Heart right ventricle (tissue), 16 donors: ENCODE measurements at regions of chr21 and their contacts with region 1.

Region 1: GRCh38 chr21:35779690-35780570 is 280.4 kb downstream of the SETD4 start:
- DNase-seq: no peak
- ATAC-seq: peak in 4 of 8 donors; percentile 40 to 48 (median 44)
- H3K4me3 ChIP-seq: no peak overlapping the region
- H3K27ac ChIP-seq: peak overlapping the region in 4 of 10 donors; percentile 20 to 56 (median 34)
- H3K4me1 ChIP-seq: peaks cover 0 to 18% (median 9%) of the 10 kb centered on the region in 9 donors
- H3K27me3 ChIP-seq: peaks cover 0 to 4% (median 0%) of the 10 kb centered on the region in 7 donors
- CTCF ChIP-seq: no peak

Region 2: DNA sequence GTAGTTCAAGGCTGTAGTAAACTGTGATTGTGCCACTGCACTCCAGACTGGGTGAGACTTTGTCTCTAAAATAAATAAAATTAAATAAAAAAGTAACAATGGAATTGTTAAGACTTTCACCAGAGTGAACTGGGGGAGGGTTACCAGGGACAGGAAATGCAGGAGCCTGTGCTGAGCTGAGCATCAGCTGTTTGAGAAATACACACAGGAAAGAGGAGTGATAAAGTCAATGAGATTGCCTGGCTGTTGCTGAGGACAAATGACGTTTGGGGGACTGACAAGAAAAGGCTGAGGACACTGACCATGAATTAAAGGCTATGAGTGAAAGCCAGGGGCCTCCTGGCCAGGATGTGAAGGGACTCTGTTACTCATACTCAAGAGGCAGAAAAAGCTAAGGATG is 54.1 kb after region 1 on chr21:
- intact Hi-C with region 1: loop called in 1 of 10 experiments (anchors 10 kb)
- DNase-seq: no peak
- ATAC-seq: peak in 4 of 8 donors; percentile 33 to 68 (median 58)
- H3K4me3 ChIP-seq: no peak overlapping the region
- H3K27ac ChIP-seq: peak overlapping the region in 2 of 10 donors; percentile 7 to 58
- H3K4me1 ChIP-seq: peaks cover 0 to 5% (median 0%) of the 10 kb centered on the region in 9 donors
- H3K27me3 ChIP-seq: peaks cover 0 to 18% (median 6%) of the 10 kb centered on the region in 7 donors
- CTCF ChIP-seq: no peak